ENCODE measurements at regions of chr9 and their contacts with region 1.

Region 1: DNA sequence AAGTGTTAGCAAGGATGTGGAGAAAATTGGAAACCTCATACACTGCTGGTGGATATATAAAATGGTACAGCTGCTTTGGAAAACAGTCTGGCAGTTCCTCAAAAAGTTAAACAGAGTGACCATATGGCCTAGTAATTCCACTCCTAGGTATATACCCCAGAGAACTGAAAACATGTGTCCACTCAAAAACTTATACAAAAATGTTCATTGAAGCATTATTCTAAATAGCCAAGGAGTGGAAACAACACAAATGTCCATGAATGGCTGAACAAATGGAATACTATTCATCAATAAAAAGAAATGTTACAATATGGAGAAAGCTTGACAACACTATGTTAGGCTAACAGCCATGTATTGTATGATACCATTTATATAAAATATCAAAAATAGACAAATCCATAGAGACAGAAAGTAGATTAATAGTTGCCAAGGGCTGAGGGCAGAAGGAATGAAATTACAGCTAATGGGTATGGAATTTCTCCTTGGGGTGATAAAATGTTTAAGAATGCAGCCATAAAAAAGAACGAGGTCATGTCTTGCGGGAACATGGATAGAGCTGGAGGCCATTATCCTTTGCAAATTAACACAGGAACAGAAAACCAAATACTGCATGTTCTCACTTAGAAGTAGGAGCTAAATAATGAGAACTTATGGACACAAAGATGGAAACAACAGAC is 33.6 kb upstream of the FBP1 start:
- DNase-seq: no peak
- H3K4me3 ChIP-seq: no peak overlapping the region
- H3K27ac ChIP-seq: no peak overlapping the region
- H3K4me1 ChIP-seq: peaks cover 6% of the 10 kb centered on the region
- H3K27me3 ChIP-seq: no peaks in the 10 kb centered on the region
- CTCF ChIP-seq: no peak
- POLR2A ChIP-seq: no peak

Region 2: GRCh38 chr9:94656200-94656599 is 16.7 kb before region 1 on chr9:
- CTCF ChIA-PET with region 1: interaction called, 20 read pairs
- POLR2A ChIA-PET with region 1: interaction called, 5 read pairs
- dilution Hi-C with region 1: no loop called
- intact Hi-C with region 1: no loop called
- DNase-seq: no peak
- H3K4me3 ChIP-seq: no peak overlapping the region
- H3K27ac ChIP-seq: no peak overlapping the region
- H3K4me1 ChIP-seq: no peaks in the 10 kb centered on the region
- H3K27me3 ChIP-seq: peaks cover 10 to 12% of the 10 kb centered on the region in 2 experiments
- CTCF ChIP-seq: no peak
- POLR2A ChIP-seq: no peak

Region 3: GRCh38 chr9:95268681-95269080 is 595.7 kb after region 1 on chr9:
- CTCF ChIA-PET with region 1: interaction called, 11 read pairs
- POLR2A ChIA-PET with region 1: no interaction called
- dilution Hi-C with region 1: no loop called
- intact Hi-C with region 1: no loop called
- DNase-seq: peak; percentile 47
- H3K4me3 ChIP-seq: no peak overlapping the region
- H3K27ac ChIP-seq: no peak overlapping the region
- H3K4me1 ChIP-seq: no peaks in the 10 kb centered on the region
- H3K27me3 ChIP-seq: no peaks in the 10 kb centered on the region
- CTCF ChIP-seq: peak; percentile 12 to 37
- POLR2A ChIP-seq: no peak